ENCODE measurements at regions of chrX and their contacts with region 1.

Region 1: DNA sequence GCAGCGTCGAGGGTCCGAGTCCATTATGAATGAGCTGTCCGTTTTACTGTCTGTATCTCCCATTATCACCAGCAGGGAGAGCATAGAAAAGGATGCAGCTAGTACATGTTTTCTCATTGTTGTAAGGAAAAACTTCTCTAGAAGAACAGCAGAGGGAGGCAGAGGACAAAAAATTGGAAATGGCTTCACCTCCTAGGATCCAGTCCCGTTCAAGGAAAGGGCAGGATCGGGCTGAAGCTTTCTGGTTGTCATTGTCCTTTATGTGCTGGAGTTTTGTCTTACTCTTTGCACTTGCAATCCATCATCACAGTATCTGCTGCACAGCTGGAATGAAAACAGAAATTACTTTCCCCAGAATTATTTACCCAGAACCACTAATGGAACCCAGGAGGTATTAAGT is 14.7 kb downstream of the NDP start:
- DNase-seq: no peak
- ATAC-seq: peak; percentile 83
- H3K4me3 ChIP-seq: no peak overlapping the region
- H3K27ac ChIP-seq: no peak overlapping the region
- H3K4me1 ChIP-seq: peaks cover 0 to 4% of the 10 kb centered on the region in 2 donors
- H3K27me3 ChIP-seq: no peaks in the 10 kb centered on the region

Region 2: DNA sequence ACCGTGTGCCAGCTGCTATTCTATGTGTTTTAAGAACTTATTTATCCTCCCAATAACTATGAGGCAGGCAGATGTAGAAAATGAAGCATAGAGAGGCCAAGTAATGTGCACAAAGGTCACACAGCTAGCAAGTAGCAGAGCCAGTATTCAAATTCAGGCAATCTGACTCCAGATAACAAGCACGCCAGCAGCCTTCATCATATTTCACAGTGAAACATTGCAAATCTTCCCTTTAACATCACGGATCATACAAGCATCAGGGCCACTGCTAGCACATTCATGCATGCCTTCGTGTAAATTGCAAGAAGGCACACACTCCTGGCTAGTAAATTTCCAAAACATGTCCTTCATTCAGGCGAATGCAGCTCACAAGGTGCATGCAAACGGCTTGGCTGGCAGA is 109.4 kb before region 1 on chrX:
- intact Hi-C with region 1: no loop called
- DNase-seq: no peak
- ATAC-seq: no peak
- H3K4me3 ChIP-seq: no peak overlapping the region
- H3K27ac ChIP-seq: no peak overlapping the region
- H3K4me1 ChIP-seq: no peaks in the 10 kb centered on the region
- H3K27me3 ChIP-seq: no peaks in the 10 kb centered on the region

Region 3: GRCh38 chrX:44012484-44013096 is 54.1 kb after region 1 on chrX:
- intact Hi-C with region 1: no loop called
- DNase-seq: peak in 1 of 2 donors; percentile 77
- ATAC-seq: no peak
- H3K4me3 ChIP-seq: no peak overlapping the region
- H3K27ac ChIP-seq: no peak overlapping the region
- H3K4me1 ChIP-seq: peaks cover 0 to 2% of the 10 kb centered on the region in 2 donors
- H3K27me3 ChIP-seq: no peaks in the 10 kb centered on the region

Region 4: DNA sequence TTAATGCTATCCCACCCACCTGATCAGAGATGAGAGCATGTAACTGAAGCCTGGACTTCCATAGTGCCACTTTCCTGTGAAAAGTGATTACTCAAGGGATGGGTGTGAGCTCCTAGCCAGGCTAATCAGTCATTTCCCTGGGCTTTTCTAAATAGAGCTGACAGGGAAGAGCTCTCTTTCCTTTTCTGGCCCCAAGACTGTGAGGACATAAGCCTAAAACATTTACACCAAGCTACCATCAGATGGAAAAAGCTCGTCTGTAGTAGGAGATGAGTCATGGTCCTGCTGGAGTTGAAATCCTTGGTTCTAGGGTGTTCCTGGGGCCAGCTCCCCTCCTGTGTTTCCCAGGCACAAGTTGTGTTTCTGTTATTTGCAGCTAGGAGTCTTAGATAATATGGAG is 67.0 kb after region 1 on chrX:
- intact Hi-C with region 1: loop called in 1 of 2 experiments (anchors 5 kb)
- DNase-seq: no peak
- ATAC-seq: no peak
- H3K4me3 ChIP-seq: no peak overlapping the region
- H3K27ac ChIP-seq: no peak overlapping the region
- H3K4me1 ChIP-seq: no peaks in the 10 kb centered on the region
- H3K27me3 ChIP-seq: no peaks in the 10 kb centered on the region

Region 5: DNA sequence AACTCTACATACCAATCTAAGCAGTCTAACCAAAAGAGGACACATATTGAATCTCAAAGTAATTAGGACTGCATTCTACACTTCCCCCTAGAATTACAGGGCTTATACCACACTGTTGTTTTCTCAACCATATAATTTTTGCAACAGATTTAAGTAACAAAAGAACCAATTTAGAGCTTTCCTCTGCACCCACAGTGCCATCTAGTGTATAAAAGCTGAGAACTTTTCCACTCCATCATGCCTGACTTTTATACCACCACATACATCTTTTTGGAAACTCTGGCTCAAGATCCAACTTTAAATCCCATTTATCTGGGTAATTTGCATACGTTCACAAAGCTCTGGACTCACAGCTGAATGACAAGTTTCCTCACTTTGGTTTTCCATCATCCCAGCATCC is 285.5 kb after region 1 on chrX:
- intact Hi-C with region 1: loop called (anchors 2 to 5 kb)
- DNase-seq: no peak
- ATAC-seq: no peak
- H3K4me3 ChIP-seq: no peak overlapping the region
- H3K27ac ChIP-seq: no peak overlapping the region
- H3K4me1 ChIP-seq: no peaks in the 10 kb centered on the region
- H3K27me3 ChIP-seq: no peaks in the 10 kb centered on the region

Measured in aorta (tissue), 5 donors.